Activated T-helper 1 cell treated with anti-CD3 and anti-CD28 coated beads, Interleukin-12 subunit alpha, Interleukin-12 subunit beta, Interleukin-2, Interleukin-4 antibody, amounts not matched to agents 30 ng/mL and 10 ng/mL and 1 ng/mL, durations not matched to agents 14 hours and 24 hours and 36 hours (primary cell): ENCODE measurements at regions of chr2 and their contacts with region 1.

Region 1: GRCh38 chr2:135004005-135004746 is 43.1 kb downstream of the MAP3K19 start:
- DNase-seq: peak; percentile 47
- H3K4me3 Mint-ChIP-seq: no peak overlapping the region
- H3K27ac Mint-ChIP-seq: no peak overlapping the region
- H3K4me1 Mint-ChIP-seq: peaks cover 7% of the 10 kb centered on the region
- H3K27me3 Mint-ChIP-seq: peaks cover 13% of the 10 kb centered on the region

Region 2: DNA sequence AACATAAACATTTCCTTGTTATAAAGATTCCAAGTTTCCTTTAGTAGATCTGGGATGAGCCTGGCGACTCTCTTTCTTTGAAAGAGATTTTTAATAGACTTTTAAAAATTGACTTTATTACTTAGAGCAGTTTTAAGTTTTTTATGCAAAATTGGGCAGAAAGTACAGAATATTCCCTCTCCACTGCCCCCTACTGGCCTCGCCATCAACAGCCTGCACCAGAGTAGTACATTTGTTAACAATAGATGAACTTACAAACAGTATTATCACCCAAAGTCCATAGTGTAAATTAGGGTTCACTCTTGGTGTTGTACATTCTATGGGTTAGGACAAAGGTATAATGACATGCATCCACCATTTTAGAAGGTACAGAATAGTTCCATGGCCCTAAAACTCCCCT is 39.2 kb after region 1 on chr2:
- intact Hi-C with region 1: no loop called
- DNase-seq: no peak
- H3K4me3 Mint-ChIP-seq: no peak overlapping the region
- H3K27ac Mint-ChIP-seq: no peak overlapping the region
- H3K4me1 Mint-ChIP-seq: no peaks in the 10 kb centered on the region
- H3K27me3 Mint-ChIP-seq: peaks cover 7% of the 10 kb centered on the region

Region 3: DNA sequence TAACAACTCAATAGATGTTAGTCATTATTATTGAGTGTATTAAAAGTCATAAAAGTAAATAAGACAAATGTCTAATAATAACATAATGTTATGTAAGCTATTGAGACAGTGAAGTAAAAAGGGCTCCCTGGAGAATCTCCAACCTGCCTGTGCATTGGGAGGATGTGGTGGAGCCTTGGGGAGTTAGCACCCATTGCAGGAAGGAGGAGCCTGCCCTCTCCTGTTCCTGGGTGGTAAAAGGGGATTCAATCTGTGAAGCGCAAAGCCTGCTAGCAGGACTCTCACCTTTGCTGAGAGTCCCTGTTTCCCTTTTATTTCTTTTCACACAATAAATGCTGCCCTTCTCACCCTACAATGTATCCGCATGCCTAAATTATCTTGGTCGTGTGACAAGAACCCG is 254.0 kb after region 1 on chr2:
- intact Hi-C with region 1: loop called (anchors 5 kb)
- DNase-seq: no peak
- H3K4me3 Mint-ChIP-seq: no peak overlapping the region
- H3K27ac Mint-ChIP-seq: no peak overlapping the region
- H3K4me1 Mint-ChIP-seq: no peaks in the 10 kb centered on the region
- H3K27me3 Mint-ChIP-seq: no peaks in the 10 kb centered on the region

Region 4: DNA sequence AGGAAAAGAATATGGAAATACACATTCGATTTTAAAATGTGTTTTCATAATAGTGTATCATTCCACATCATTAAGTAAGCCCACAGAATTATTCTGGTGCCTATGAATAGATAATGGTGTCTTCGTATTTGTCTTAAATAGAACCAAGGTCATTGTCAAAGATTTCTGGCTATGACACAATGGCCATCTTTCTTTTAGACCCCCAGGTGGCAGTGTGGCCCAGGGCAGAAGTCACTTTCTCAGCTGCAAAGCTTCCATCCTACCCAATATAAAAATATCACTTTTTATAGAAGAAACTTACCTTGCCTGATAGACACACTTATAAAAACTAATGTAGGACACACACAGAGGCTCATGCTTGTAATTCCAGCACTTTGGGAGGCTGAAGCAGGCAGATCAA is 469.4 kb after region 1 on chr2:
- intact Hi-C with region 1: loop called (anchors 5 kb)
- DNase-seq: no peak
- H3K4me3 Mint-ChIP-seq: no peak overlapping the region
- H3K27ac Mint-ChIP-seq: no peak overlapping the region
- H3K4me1 Mint-ChIP-seq: peaks cover 6% of the 10 kb centered on the region
- H3K27me3 Mint-ChIP-seq: no peaks in the 10 kb centered on the region

Region 5: GRCh38 chr2:135600915-135601314 is 596.7 kb after region 1 on chr2:
- intact Hi-C with region 1: loop called (anchors 2 kb)
- DNase-seq: no peak
- H3K4me3 Mint-ChIP-seq: no peak overlapping the region
- H3K27ac Mint-ChIP-seq: no peak overlapping the region
- H3K4me1 Mint-ChIP-seq: no peaks in the 10 kb centered on the region
- H3K27me3 Mint-ChIP-seq: no peaks in the 10 kb centered on the region